Panc1 (cell line): ENCODE measurements at regions of chr17 and their contacts with region 1.

Region 1: GRCh38 chr17:29495011-29495410 is 71.8 kb downstream of the ABHD15 start:
- DNase-seq: peak; percentile 4
- ATAC-seq: no peak
- H3K4me3 ChIP-seq: no peak overlapping the region
- H3K27ac ChIP-seq: no peak overlapping the region
- H3K4me1 ChIP-seq: no peaks in the 10 kb centered on the region
- H3K27me3 ChIP-seq: no peaks in the 10 kb centered on the region
- CTCF ChIP-seq: no peak

Region 2: GRCh38 chr17:29469276-29469675 is 25.7 kb before region 1 on chr17:
- CTCF ChIA-PET with region 1: no interaction called
- POLR2A ChIA-PET with region 1: interaction called, 10 read pairs
- in situ Hi-C with region 1: no loop called
- intact Hi-C with region 1: no loop called
- DNase-seq: no peak
- ATAC-seq: no peak
- H3K4me3 ChIP-seq: no peak overlapping the region
- H3K27ac ChIP-seq: no peak overlapping the region
- H3K4me1 ChIP-seq: no peaks in the 10 kb centered on the region
- H3K27me3 ChIP-seq: no peaks in the 10 kb centered on the region
- CTCF ChIP-seq: no peak

Region 3: DNA sequence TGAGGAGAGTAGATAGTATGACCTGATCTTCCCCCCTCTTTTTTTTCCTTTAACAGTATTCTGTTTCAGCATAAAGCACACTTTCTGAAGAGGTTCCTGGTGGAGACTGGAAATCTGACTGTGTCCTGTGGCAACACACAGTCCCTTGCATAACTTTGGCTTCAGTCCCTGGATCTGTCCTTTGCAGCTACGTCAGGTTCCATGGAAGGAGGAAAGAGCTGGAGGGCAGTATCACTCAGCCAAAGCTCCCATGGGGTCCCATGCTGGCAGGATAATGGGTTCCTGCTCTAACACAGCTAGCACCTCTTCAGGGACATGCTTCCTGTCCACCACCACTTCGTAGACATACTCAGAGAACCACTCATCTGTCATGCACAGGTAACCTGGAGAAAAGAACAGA is 753.8 kb after region 1 on chr17:
- CTCF ChIA-PET with region 1: no interaction called
- POLR2A ChIA-PET with region 1: no interaction called
- in situ Hi-C with region 1: no loop called
- intact Hi-C with region 1: no loop called
- DNase-seq: no peak
- ATAC-seq: no peak
- H3K4me3 ChIP-seq: no peak overlapping the region
- H3K27ac ChIP-seq: no peak overlapping the region
- H3K4me1 ChIP-seq: no peaks in the 10 kb centered on the region
- H3K27me3 ChIP-seq: no peaks in the 10 kb centered on the region
- CTCF ChIP-seq: no peak

Region 4: DNA sequence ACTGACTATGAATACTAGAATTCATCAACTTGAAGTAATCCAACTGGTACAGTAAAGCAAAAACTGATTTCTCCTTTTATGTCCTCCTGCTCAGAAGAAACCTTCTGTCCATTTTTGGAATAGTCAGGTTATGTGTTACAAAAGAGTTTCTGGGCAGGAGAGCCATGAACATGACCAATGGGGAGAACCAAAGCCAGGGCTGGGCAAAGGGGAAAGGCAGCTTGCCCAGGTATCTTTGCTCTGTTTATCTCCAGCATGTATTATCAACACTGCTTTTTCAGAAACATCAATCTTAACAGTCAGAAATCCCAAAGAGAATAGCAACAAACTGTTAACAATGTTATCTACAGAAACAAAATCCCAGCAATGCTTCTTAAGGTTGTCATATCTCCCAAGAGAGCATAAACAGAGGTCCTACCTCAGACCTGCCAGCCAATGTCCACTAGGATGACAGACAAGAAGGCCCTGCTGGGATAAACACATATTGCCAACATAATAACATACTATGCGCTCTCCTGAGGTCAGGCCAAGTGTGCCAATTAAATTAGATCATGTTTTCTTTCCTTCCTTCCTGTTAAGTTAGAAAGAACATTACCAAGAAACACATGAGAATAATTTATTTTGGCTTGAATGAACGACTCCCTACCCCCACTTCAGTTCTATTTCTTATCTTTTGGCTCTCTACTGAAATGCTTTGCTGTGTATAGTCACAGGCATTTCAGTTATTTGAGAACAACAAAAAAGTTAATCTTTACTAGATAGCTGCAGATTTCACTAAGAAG is 768.7 kb after region 1 on chr17:
- CTCF ChIA-PET with region 1: no interaction called
- POLR2A ChIA-PET with region 1: no interaction called
- in situ Hi-C with region 1: no loop called
- intact Hi-C with region 1: no loop called
- DNase-seq: no peak
- ATAC-seq: no peak
- H3K4me3 ChIP-seq: no peak overlapping the region
- H3K27ac ChIP-seq: no peak overlapping the region
- H3K4me1 ChIP-seq: no peaks in the 10 kb centered on the region
- H3K27me3 ChIP-seq: no peaks in the 10 kb centered on the region
- CTCF ChIP-seq: no peak

Region 5: GRCh38 chr17:30677550-30678249 is 1182.7 kb after region 1 on chr17:
- CTCF ChIA-PET with region 1: no interaction called
- POLR2A ChIA-PET with region 1: no interaction called
- in situ Hi-C with region 1: no loop called
- intact Hi-C with region 1: no loop called
- DNase-seq: no peak
- ATAC-seq: no peak
- H3K4me3 ChIP-seq: no peak overlapping the region
- H3K27ac ChIP-seq: no peak overlapping the region
- H3K4me1 ChIP-seq: no peaks in the 10 kb centered on the region
- H3K27me3 ChIP-seq: no peaks in the 10 kb centered on the region
- CTCF ChIP-seq: no peak